ENCODE measurements at regions of chr14 and their contacts with region 1.

Region 1: GRCh38 chr14:84225268-84225667 is 1304.7 kb upstream of the FLRT2 start:
- DNase-seq: no peak
- ATAC-seq: no peak
- H3K4me3 ChIP-seq: no peak overlapping the region
- H3K27ac ChIP-seq: no peak overlapping the region
- H3K4me1 ChIP-seq: no peaks in the 10 kb centered on the region
- H3K27me3 ChIP-seq: no peaks in the 10 kb centered on the region
- CTCF ChIP-seq: no peak

Region 2: DNA sequence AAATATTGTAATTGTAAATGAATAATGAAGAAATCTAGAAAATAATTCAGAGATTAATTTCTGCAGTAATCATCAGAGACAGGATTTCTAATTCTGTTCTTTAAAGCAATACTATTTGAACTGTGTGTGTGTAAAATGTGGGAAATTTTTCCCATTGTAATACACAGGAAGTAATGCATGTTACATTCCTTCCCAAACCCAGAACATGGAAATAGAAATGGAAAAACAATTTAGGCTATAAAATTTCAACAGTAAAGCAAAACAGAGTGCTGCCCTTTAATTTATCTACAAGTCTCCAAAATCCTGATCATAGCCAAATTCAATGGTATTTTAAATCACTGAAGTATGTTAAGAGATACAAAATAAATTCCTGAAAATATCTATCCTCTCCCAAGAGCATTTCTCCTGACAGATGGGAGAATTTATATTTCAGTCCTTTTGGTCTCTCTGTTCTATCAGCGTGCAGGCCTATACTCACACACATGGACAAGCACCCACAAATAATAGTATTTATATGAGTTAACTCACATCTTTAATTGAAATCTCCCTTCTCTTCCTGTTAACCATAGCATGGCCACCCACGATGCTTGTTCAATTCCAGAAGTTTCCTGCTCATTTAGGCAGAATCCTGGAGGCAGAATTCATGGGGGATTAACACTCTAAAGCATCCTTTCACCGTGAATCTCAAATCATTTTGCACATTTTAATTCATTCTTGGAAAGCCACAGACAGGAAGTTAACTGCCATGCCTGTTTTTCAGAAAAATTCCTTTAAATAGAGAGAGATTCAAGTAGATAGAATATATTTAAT is 160.7 kb before region 1 on chr14:
- CTCF ChIA-PET with region 1: no interaction called
- POLR2A ChIA-PET with region 1: interaction called, 11 read pairs
- in situ Hi-C with region 1: no loop called
- intact Hi-C with region 1: no loop called
- DNase-seq: no peak
- ATAC-seq: no peak
- H3K4me3 ChIP-seq: no peak overlapping the region
- H3K27ac ChIP-seq: no peak overlapping the region
- H3K4me1 ChIP-seq: no peaks in the 10 kb centered on the region
- H3K27me3 ChIP-seq: no peaks in the 10 kb centered on the region
- CTCF ChIP-seq: no peak